Panc1 (cell line): ENCODE measurements at regions of chr20 and their contacts with region 1.

Region 1: DNA sequence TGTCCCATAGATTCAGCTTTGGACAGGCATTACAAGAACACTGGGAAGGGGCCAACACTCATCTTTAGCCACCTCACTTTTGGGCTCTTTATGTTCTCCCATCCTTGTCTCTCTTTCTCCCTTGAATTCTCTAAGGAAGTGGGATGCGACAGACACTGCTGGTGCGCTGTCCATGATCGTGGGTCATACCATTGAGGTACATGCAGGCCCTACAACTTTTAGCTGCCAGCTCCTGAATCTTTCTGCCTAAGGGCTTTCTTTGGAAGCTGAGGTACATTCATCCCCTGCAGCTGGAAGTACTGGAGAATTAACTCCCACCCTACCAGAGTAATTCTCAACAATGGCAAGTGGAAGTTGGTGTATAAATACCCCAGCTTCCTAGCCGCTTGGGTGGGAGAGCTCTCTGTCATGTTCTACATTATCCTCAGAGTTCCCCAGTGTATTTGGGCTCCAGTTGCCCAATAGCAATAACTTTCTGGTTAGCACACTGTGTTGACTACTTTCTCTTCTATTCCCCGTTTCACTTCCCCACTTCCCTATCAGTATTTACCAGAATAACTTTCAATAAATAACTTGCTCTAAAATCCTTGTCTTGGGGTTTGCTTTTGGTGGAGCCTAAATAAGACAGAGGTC is 309.4 kb upstream of the RNF24 start:
- DNase-seq: no peak
- ATAC-seq: no peak
- H3K4me3 ChIP-seq: no peak overlapping the region
- H3K27ac ChIP-seq: no peak overlapping the region
- H3K4me1 ChIP-seq: no peaks in the 10 kb centered on the region
- H3K27me3 ChIP-seq: no peaks in the 10 kb centered on the region
- CTCF ChIP-seq: no peak

Region 2: GRCh38 chr20:4787069-4787468 is 462.3 kb after region 1 on chr20:
- CTCF ChIA-PET with region 1: no interaction called
- POLR2A ChIA-PET with region 1: interaction called, 18 read pairs
- in situ Hi-C with region 1: no loop called
- intact Hi-C with region 1: no loop called
- DNase-seq: no peak
- ATAC-seq: no peak
- H3K4me3 ChIP-seq: no peak overlapping the region
- H3K27ac ChIP-seq: no peak overlapping the region
- H3K4me1 ChIP-seq: no peaks in the 10 kb centered on the region
- H3K27me3 ChIP-seq: peaks cover 18% of the 10 kb centered on the region
- CTCF ChIP-seq: no peak